ENCODE measurements at regions of chr3 and their contacts with region 1.

Region 1: DNA sequence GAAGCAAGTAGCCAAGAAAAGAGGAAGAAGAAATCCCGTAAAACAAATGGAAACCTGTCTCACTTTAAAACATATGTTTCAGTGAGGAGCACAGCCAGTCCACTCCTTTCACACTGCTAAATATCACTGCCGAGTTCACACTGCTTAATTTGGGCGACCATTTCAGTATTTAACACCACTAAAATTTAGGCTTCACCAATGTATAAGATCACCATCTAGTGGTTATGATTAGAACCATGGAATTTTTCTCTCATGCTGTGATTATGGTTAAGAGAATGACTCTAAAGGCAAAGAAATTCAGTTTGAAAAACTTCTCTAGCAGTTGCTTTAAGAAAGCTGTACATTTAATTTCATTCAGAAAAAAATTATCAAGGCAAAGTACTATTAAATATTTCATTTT is 16.6 kb downstream of the SLC4A7 start:
- DNase-seq: no peak
- ATAC-seq: peak; percentile 92
- H3K4me3 ChIP-seq: no peak overlapping the region
- H3K27ac ChIP-seq: 0 out of 2 replicates have a peak overlapping the region, but pooled peaks have one; percentile 1
- H3K4me1 ChIP-seq: no peaks in the 10 kb centered on the region
- H3K27me3 ChIP-seq: no peaks in the 10 kb centered on the region
- CTCF ChIP-seq: peak; percentile 41 to 66 (median 52); a peak in 5 of 6 replicates
- EP300 ChIP-seq: no peak
- POLR2A ChIP-seq: no peak
- RAD21 ChIP-seq: peak; percentile 64

Region 2: GRCh38 chr3:26847675-26848074 is 619.9 kb before region 1 on chr3:
- CTCF ChIA-PET with region 1: no interaction called
- POLR2A ChIA-PET with region 1: no interaction called
- RAD21 ChIA-PET with region 1: no interaction called
- SMC1A ChIA-PET with region 1: no interaction called
- in situ Hi-C with region 1: no loop called
- intact Hi-C with region 1: no loop called
- DNase-seq: no peak
- ATAC-seq: no peak
- H3K4me3 ChIP-seq: no peak overlapping the region
- H3K27ac ChIP-seq: no peak overlapping the region
- H3K4me1 ChIP-seq: no peaks in the 10 kb centered on the region
- H3K27me3 ChIP-seq: no peaks in the 10 kb centered on the region
- CTCF ChIP-seq: no peak
- EP300 ChIP-seq: no peak
- POLR2A ChIP-seq: no peak
- RAD21 ChIP-seq: no peak

Region 3: GRCh38 chr3:27134165-27134796 is 333.3 kb before region 1 on chr3:
- CTCF ChIA-PET with region 1: interaction called, 7 read pairs
- POLR2A ChIA-PET with region 1: no interaction called
- RAD21 ChIA-PET with region 1: interaction called, 10 read pairs
- SMC1A ChIA-PET with region 1: no interaction called
- in situ Hi-C with region 1: no loop called
- intact Hi-C with region 1: loop called (anchors 5 kb)
- DNase-seq: peak; percentile 8
- ATAC-seq: peak; percentile 97
- H3K4me3 ChIP-seq: no peak overlapping the region
- H3K27ac ChIP-seq: no peak overlapping the region
- H3K4me1 ChIP-seq: no peaks in the 10 kb centered on the region
- H3K27me3 ChIP-seq: no peaks in the 10 kb centered on the region
- CTCF ChIP-seq: peak; percentile 85 to 90 (median 90)
- EP300 ChIP-seq: no peak
- POLR2A ChIP-seq: no peak
- RAD21 ChIP-seq: peak; percentile 92

Region 4: DNA sequence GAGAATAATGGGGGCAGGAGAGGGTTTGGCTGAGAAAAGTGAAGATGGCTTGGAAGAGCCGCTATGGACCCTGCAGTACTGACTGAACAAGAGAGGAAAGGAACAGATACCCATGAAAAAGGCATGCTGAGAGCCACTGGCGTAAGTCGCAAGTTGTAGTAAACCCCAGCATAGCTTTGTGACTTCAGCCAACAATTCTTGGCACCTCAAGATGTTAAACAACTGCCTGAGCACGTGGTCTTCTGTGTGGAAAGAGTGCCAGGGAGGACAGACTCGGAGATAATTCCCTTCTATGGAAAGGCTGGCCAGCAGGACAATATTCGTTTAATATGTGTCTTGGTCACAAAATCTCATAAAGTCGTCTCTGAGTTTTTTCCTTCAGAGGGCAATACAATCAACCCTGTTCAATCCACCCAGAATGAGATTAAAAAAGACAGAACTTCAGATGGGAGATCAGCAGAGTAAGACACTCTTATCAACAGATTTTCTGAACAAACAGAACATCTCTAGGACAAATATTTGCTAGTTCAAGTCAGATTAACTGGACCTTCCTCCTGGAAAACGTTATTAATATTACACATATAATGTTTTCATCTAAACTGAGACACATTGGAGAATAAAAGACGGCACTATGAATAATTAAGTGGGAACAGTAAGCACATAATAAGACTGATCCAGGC is 147.6 kb before region 1 on chr3:
- CTCF ChIA-PET with region 1: interaction called, 8 read pairs
- POLR2A ChIA-PET with region 1: no interaction called
- RAD21 ChIA-PET with region 1: interaction called, 7 read pairs
- SMC1A ChIA-PET with region 1: interaction called, 8 read pairs
- in situ Hi-C with region 1: loop called (anchors 5 kb)
- intact Hi-C with region 1: no loop called
- DNase-seq: no peak
- ATAC-seq: no peak
- H3K4me3 ChIP-seq: no peak overlapping the region
- H3K27ac ChIP-seq: no peak overlapping the region
- H3K4me1 ChIP-seq: no peaks in the 10 kb centered on the region
- H3K27me3 ChIP-seq: no peaks in the 10 kb centered on the region
- CTCF ChIP-seq: no peak
- EP300 ChIP-seq: no peak
- POLR2A ChIP-seq: no peak
- RAD21 ChIP-seq: no peak

Region 5: DNA sequence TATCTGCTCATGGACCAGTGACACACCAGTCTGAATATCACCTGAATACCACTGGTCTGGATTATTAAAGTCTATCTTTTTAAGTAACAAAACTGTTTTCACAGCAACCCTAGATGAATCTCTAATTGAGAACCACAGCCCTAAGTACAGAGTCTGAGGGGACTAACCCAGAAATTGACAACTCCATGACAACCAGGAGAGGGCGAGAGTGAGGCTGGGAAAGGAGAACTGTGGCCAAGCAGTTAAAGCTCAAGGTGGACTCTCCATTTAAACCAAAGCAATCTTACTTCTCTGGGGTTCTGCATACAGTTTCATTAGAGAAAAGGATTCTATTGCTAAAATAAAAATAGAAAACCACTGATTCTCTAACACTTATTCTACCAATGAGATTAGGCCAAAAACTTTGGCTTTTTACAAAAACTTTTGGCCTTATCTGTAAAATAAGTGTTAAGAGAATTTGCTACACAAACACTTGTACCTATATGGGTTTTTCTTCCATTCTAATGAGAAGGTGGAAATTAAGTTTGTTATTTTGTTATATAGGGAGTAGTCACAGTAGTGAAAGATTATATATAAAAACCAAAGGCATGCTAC is 109.8 kb before region 1 on chr3:
- CTCF ChIA-PET with region 1: interaction called, 28 read pairs
- POLR2A ChIA-PET with region 1: no interaction called
- RAD21 ChIA-PET with region 1: interaction called, 20 read pairs
- SMC1A ChIA-PET with region 1: interaction called, 19 read pairs
- in situ Hi-C with region 1: no loop called
- intact Hi-C with region 1: loop called (anchors 1 kb)
- DNase-seq: no peak
- ATAC-seq: peak; percentile 96
- H3K4me3 ChIP-seq: no peak overlapping the region
- H3K27ac ChIP-seq: no peak overlapping the region
- H3K4me1 ChIP-seq: peaks cover 14% of the 10 kb centered on the region
- H3K27me3 ChIP-seq: no peaks in the 10 kb centered on the region
- CTCF ChIP-seq: peak; percentile 72 to 84 (median 72)
- EP300 ChIP-seq: no peak
- POLR2A ChIP-seq: no peak
- RAD21 ChIP-seq: peak; percentile 82

Region 6: GRCh38 chr3:27454914-27455313 is 12.6 kb before region 1 on chr3:
- CTCF ChIA-PET with region 1: interaction called, 12 read pairs
- POLR2A ChIA-PET with region 1: interaction called, 4 read pairs
- RAD21 ChIA-PET with region 1: interaction called, 13 read pairs
- SMC1A ChIA-PET with region 1: interaction called, 21 read pairs
- in situ Hi-C with region 1: no loop called
- intact Hi-C with region 1: no loop called
- DNase-seq: no peak
- ATAC-seq: peak; percentile 87
- H3K4me3 ChIP-seq: no peak overlapping the region
- H3K27ac ChIP-seq: peak overlapping the region; percentile 52; the same call in 1 of the 2 replicates
- H3K4me1 ChIP-seq: peaks cover 14% of the 10 kb centered on the region
- H3K27me3 ChIP-seq: no peaks in the 10 kb centered on the region
- CTCF ChIP-seq: no peak
- EP300 ChIP-seq: no peak
- POLR2A ChIP-seq: no peak
- RAD21 ChIP-seq: no peak

Region 7: GRCh38 chr3:27681245-27681748 is 213.8 kb after region 1 on chr3:
- CTCF ChIA-PET with region 1: interaction called, 21 read pairs
- POLR2A ChIA-PET with region 1: no interaction called
- RAD21 ChIA-PET with region 1: interaction called, 31 read pairs
- SMC1A ChIA-PET with region 1: interaction called, 36 read pairs
- in situ Hi-C with region 1: no loop called
- intact Hi-C with region 1: no loop called
- DNase-seq: peak; percentile 38
- ATAC-seq: peak; percentile 87
- H3K4me3 ChIP-seq: no peak overlapping the region
- H3K27ac ChIP-seq: no peak overlapping the region
- H3K4me1 ChIP-seq: no peaks in the 10 kb centered on the region
- H3K27me3 ChIP-seq: no peaks in the 10 kb centered on the region
- CTCF ChIP-seq: peak; percentile 47 to 79 (median 61)
- EP300 ChIP-seq: no peak
- POLR2A ChIP-seq: no peak
- RAD21 ChIP-seq: peak; percentile 91

Measured in GM12878 (cell line).